Prostate gland (tissue), 2 donors: ENCODE measurements at regions of chr4 and their contacts with region 1.

Region 1: GRCh38 chr4:142126890-142127497 is 490.6 kb downstream of the IL15 start:
- DNase-seq: peak; percentile 64
- H3K4me3 ChIP-seq: no peak overlapping the region
- H3K27ac ChIP-seq: no peak overlapping the region
- H3K4me1 ChIP-seq: no peaks in the 10 kb centered on the region
- H3K27me3 ChIP-seq: no peaks in the 10 kb centered on the region
- CTCF ChIP-seq: peak; percentile 45 to 85 (median 78)
- POLR2A ChIP-seq: no peak

Region 2: DNA sequence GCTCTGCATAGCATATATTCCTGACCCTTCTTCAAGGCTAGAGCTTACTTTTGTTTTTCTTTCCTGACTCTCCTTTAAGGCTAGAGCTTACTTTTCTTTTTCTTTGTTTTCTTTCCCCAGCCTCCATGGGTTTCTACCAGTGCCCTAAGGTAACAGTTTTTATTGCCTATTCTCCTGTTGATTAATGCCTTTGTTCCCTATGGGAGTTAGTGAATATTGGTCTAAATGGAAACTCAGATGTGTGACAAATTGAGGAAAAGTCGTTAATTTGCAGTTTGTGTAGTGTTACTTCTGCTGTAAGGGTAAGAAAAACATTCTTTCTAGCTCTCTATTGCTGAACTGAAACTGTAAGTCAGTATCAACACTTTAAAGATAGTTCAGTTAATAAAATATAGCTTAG is 131.9 kb before region 1 on chr4:
- intact Hi-C with region 1: no loop called
- DNase-seq: no peak
- H3K4me3 ChIP-seq: no peak overlapping the region
- H3K27ac ChIP-seq: no peak overlapping the region
- H3K4me1 ChIP-seq: no peaks in the 10 kb centered on the region
- H3K27me3 ChIP-seq: no peaks in the 10 kb centered on the region
- CTCF ChIP-seq: no peak
- POLR2A ChIP-seq: no peak

Region 3: DNA sequence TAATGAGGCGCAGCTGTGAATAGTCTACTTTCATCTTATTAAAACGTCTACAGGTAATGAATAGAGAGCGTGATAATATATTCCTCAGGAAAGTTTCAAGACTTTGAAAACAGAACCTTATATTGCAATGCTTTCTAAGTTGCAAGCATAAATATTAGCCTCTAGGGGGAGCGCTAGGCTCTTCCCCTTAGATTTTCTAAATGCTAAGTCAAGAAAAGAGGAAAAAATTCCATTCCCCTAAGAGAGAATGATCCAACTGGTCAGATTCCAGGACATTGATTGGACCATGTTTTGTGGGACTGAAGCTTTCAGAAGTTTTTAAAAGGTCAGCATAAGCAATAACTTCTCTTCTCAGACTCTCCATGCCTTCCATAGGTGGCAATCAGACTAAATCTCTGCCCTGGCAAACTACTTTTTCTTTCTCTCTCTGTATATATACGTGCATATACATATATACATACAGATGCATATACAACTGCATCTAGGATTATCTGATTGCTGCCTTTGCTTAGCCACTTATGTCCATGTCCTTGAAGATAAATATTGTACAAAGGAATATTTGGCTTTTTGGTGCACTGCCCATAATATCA is 226.2 kb after region 1 on chr4:
- intact Hi-C with region 1: loop called (anchors 10 kb)
- DNase-seq: peak; percentile 16
- H3K4me3 ChIP-seq: no peak overlapping the region
- H3K27ac ChIP-seq: no peak overlapping the region
- H3K4me1 ChIP-seq: no peaks in the 10 kb centered on the region
- H3K27me3 ChIP-seq: no peaks in the 10 kb centered on the region
- CTCF ChIP-seq: peak; percentile 58 to 87 (median 80)
- POLR2A ChIP-seq: no peak

Region 4: GRCh38 chr4:142719854-142720541 is 593.0 kb after region 1 on chr4:
- intact Hi-C with region 1: loop called (anchors 10 kb)
- DNase-seq: no peak
- H3K4me3 ChIP-seq: no peak overlapping the region
- H3K27ac ChIP-seq: no peak overlapping the region
- H3K4me1 ChIP-seq: no peaks in the 10 kb centered on the region
- H3K27me3 ChIP-seq: no peaks in the 10 kb centered on the region
- CTCF ChIP-seq: peak in 2 of 4 experiments; percentile 45 to 62
- POLR2A ChIP-seq: no peak

Region 5: DNA sequence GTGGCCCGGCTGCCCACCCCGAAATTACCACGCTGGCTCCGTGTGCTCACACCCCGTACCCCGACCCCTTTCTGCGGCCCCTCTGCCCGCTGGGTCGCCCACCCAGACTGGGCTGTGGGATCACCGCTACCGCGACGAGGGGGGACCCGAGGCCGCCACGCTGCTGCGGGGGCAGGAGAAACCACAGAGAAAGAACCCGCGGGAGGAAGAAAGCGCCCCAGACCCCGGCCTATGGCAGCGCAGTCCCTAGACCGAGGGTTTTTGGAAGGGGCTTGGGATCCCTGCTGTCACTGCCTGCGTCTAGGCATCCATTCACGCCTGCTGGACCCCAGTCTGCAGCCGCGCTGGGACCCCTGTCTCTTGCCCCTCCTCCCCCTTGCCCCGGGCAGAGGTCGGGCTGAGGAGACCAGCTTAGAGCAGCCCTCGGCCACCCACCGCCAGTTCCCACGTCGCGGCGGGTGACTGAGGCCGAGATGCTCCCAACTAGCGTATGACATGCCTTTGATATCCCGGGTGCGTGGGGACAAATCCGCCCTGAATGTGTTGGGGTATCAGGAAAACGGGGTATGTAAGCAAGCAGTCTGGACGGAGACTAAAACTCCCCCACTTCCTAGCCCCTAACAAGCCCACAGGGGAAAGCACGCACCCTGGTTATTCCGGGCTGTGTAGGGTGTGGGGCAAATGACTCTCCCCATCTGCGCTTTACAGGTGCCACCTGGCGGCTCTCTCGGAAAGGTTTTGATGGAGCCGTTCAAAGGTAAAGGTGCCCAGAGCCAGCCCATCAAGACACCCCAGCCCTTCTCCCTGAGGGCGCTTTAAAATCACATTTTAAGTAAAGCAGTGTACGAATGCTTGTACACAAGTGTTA is 720.0 kb after region 1 on chr4:
- intact Hi-C with region 1: loop called (anchors 5 kb)
- DNase-seq: peak; percentile 52
- H3K4me3 ChIP-seq: peak overlapping the region; percentile 40 to 52
- H3K27ac ChIP-seq: peak overlapping the region; percentile 35 to 46
- H3K4me1 ChIP-seq: no peaks in the 10 kb centered on the region
- H3K27me3 ChIP-seq: no peaks in the 10 kb centered on the region
- CTCF ChIP-seq: peak; percentile 12 to 68 (median 50)
- POLR2A ChIP-seq: no peak

Region 6: DNA sequence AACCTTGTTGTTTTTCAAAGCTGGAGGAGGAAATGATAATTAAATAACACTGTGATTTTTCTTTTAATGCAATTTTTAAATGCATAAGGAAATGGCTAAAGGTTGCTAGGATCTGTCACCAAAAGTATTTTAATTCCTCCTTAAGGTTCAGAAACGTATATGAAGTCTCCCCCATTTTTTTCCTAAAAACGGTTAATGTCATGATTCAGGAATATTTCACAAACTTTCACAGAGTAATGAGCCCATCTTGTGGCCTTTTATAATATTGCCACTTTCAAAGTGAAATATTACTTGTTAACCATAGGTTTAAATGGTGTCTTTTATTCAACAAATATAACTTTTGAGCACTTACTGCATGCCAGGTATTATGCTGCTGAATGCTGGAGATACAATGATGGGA is 958.2 kb after region 1 on chr4:
- intact Hi-C with region 1: loop called (anchors 10 kb)
- DNase-seq: no peak
- H3K4me3 ChIP-seq: no peak overlapping the region
- H3K27ac ChIP-seq: no peak overlapping the region
- H3K4me1 ChIP-seq: no peaks in the 10 kb centered on the region
- H3K27me3 ChIP-seq: no peaks in the 10 kb centered on the region
- CTCF ChIP-seq: peak in 1 of 4 experiments; percentile 9
- POLR2A ChIP-seq: no peak